ENCODE measurements at regions of chr7 and their contacts with region 1.

Region 1: DNA sequence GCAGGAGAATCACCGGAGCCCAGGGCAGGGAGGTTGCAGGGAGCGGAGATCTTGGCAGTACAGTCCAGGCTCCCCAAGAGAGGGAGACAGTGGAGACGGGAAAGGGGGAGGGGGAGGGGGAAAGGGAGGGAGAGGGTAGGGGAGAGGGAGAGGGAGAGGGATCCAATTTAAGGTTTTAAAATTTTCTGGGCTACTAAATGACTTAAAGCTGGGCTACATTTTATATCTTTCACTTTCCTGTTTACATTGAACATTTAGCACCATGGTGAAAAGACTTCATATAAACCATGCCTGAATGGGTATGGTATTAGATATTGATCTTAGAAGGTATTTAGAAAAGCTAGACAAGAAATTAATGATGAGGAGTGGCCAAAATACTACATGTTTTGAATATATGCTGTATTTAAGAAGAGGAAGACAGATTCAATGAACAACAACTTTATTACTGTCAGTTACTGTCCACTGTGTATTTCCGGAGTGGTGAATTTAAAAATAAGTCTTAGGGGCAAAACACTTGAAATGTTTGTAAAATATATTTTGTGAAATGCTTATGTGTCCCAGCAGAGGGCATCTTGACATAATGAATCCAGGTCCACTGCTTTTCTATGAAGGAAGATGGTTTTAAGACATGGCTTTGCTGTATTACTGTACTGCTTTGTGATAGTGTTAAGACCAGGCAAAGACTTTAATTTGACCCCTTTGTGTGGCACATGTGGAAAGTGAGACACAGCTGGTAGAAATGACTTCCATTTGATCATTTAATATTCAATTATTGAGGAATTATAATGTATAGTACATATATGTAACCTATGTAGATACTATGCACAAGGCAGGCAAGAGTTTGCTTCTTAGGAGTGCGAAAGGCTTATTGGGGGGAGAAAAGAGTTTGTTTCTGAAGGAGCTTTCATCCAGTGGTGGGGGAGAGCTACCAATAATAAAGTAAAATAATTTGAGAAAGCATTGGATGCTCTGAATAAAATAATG is 52.8 kb downstream of the NRF1 start:
- DNase-seq: peak in 1 of 35 experiments; percentile 21
- ATAC-seq: no peak
- H3K4me3 ChIP-seq: no peak overlapping the region
- H3K4me3 Mint-ChIP-seq: no peak overlapping the region
- H3K27ac ChIP-seq: no peak overlapping the region
- H3K27ac Mint-ChIP-seq: no peak overlapping the region
- H3K4me1 ChIP-seq: no peaks in the 10 kb centered on the region
- H3K4me1 Mint-ChIP-seq: peaks cover 4 to 13% (median 9%) of the 10 kb centered on the region in 3 donors
- H3K27me3 ChIP-seq: no peaks in the 10 kb centered on the region
- H3K27me3 Mint-ChIP-seq: no peaks in the 10 kb centered on the region

Region 2: GRCh38 chr7:129644634-129645230 is 19.6 kb before region 1 on chr7:
- CTCF ChIA-PET with region 1: no interaction called
- POLR2A ChIA-PET with region 1: interaction called in 1 of 2 experiments, 22 read pairs
- DNase-seq: peak in 1 of 35 experiments; percentile 43
- ATAC-seq: no peak
- H3K4me3 ChIP-seq: no peak overlapping the region
- H3K4me3 Mint-ChIP-seq: no peak overlapping the region
- H3K27ac ChIP-seq: no peak overlapping the region
- H3K27ac Mint-ChIP-seq: no peak overlapping the region
- H3K4me1 ChIP-seq: no peaks in the 10 kb centered on the region
- H3K4me1 Mint-ChIP-seq: peaks cover 20 to 37% (median 35%) of the 10 kb centered on the region in 3 donors
- H3K27me3 ChIP-seq: no peaks in the 10 kb centered on the region
- H3K27me3 Mint-ChIP-seq: no peaks in the 10 kb centered on the region

Region 3: DNA sequence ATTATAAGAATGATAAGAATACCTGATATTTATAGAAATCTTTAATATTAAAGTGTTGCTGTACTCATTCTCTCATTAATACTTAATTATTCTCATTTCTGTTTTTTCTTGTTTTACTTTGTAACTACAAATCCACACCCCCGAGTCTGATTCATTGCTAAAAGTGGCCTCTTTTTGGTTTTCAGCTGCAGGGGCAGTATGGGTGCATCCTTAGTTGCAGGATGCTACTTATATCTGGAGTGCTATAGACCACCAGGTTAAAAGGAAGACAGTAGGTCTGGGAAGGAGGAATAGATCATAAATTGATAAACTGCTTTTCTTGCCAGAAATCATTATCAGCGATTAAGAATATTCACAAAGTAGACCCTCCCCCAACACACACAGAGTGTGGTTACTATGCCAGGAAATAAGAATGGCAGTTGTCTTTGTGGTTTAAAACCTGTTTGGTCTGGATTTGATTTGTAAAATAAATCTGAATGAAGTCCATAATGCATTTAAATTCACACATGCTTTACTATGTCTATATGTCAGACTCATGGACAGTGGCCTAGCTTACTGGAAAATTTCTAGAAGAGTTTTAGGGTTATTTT is 43.7 kb after region 1 on chr7:
- CTCF ChIA-PET with region 1: no interaction called
- POLR2A ChIA-PET with region 1: no interaction called
- DNase-seq: no peak
- ATAC-seq: no peak
- H3K4me3 ChIP-seq: no peak overlapping the region
- H3K4me3 Mint-ChIP-seq: no peak overlapping the region
- H3K27ac ChIP-seq: no peak overlapping the region
- H3K27ac Mint-ChIP-seq: no peak overlapping the region
- H3K4me1 ChIP-seq: no peaks in the 10 kb centered on the region
- H3K4me1 Mint-ChIP-seq: peaks cover 25 to 34% (median 25%) of the 10 kb centered on the region in 3 donors
- H3K27me3 ChIP-seq: no peaks in the 10 kb centered on the region
- H3K27me3 Mint-ChIP-seq: no peaks in the 10 kb centered on the region

Region 4: DNA sequence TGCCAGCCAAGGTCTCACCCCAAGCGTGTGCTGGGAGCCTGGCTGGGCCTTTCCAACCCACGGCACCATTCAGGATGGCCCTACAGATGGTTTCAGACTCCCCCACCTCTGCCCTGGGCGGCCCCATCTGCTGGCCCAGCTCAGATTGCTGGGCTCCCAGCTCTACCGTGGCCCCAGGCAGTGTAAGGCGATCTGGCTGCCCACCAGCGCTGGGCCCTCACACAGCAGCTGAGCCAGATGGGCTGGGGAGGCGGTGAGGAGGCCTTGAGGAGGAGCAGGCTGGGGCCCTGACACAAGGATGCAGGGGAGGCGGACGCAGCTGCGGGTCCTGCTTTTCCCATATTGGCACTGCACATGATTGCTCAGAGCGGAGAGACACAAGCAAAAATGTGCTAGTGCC is 110.0 kb after region 1 on chr7:
- CTCF ChIA-PET with region 1: no interaction called
- POLR2A ChIA-PET with region 1: no interaction called
- DNase-seq: no peak
- ATAC-seq: no peak
- H3K4me3 ChIP-seq: no peak overlapping the region
- H3K4me3 Mint-ChIP-seq: no peak overlapping the region
- H3K27ac ChIP-seq: no peak overlapping the region
- H3K27ac Mint-ChIP-seq: no peak overlapping the region
- H3K4me1 ChIP-seq: peaks cover 0 to 19% of the 10 kb centered on the region in 2 experiments
- H3K4me1 Mint-ChIP-seq: peaks cover 4 to 7% (median 4%) of the 10 kb centered on the region in 3 donors
- H3K27me3 ChIP-seq: peaks cover 11 to 62% of the 10 kb centered on the region in 2 experiments
- H3K27me3 Mint-ChIP-seq: peaks cover 7 to 31% of the 10 kb centered on the region in 2 donors